Adrenal gland (tissue), 19 donors: ENCODE measurements at regions of chr14 and their contacts with region 1.

Region 1: DNA sequence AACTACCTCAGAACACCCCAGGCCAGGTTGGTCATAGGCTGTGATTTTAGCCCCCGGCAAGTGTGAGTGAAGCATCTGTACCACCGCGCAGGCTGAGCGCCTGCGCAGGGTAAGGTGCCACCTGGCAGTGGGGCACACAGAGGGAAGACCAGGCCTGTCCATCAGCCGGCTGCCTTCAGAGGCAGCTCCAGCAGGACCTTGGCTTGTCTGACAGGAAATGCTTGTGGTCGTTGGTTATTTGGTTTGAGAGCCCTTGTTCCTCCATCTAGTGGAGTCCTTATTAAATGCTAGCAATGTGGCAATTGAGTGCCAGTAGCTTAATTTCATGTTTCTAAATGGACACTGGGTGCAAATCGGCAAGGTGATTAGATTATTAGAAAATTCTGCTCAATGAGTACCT is 27.5 kb downstream of the SLC25A29 start:
- DNase-seq: peak in 1 of 7 donors; percentile 20
- H3K4me3 ChIP-seq: no peak overlapping the region
- H3K27ac ChIP-seq: no peak overlapping the region
- H3K4me1 ChIP-seq: peaks cover 2 to 28% of the 10 kb centered on the region in 2 donors
- H3K27me3 ChIP-seq: no peaks in the 10 kb centered on the region
- CTCF ChIP-seq: no peak
- POLR2A ChIP-seq: no peak

Region 2: GRCh38 chr14:100122481-100123222 is 156.1 kb before region 1 on chr14:
- intact Hi-C with region 1: no loop called
- DNase-seq: no peak
- H3K4me3 ChIP-seq: no peak overlapping the region
- H3K27ac ChIP-seq: no peak overlapping the region
- H3K4me1 ChIP-seq: no peaks in the 10 kb centered on the region
- H3K27me3 ChIP-seq: no peaks in the 10 kb centered on the region
- CTCF ChIP-seq: no peak
- POLR2A ChIP-seq: no peak

Region 3: GRCh38 chr14:100239840-100240724 is 38.6 kb before region 1 on chr14:
- intact Hi-C with region 1: loop called in 1 of 2 experiments (anchors 5 kb)
- DNase-seq: peak; percentile 90 to 95 (median 93)
- H3K4me3 ChIP-seq: peak overlapping the region; percentile 48 to 100 (median 95)
- H3K27ac ChIP-seq: peak overlapping the region; percentile 87 to 100 (median 99)
- H3K4me1 ChIP-seq: peaks cover 28 to 52% of the 10 kb centered on the region in 2 donors
- H3K27me3 ChIP-seq: no peaks in the 10 kb centered on the region
- CTCF ChIP-seq: peak in 5 of 6 experiments; percentile 38 to 81 (median 65)
- POLR2A ChIP-seq: peak; percentile 63 to 84

Region 4: GRCh38 chr14:101083564-101084435 is 805.1 kb after region 1 on chr14:
- intact Hi-C with region 1: no loop called
- DNase-seq: peak in 2 of 7 donors; percentile 18 to 30
- H3K4me3 ChIP-seq: no peak overlapping the region
- H3K27ac ChIP-seq: no peak overlapping the region
- H3K4me1 ChIP-seq: no peaks in the 10 kb centered on the region
- H3K27me3 ChIP-seq: no peaks in the 10 kb centered on the region
- CTCF ChIP-seq: no peak
- POLR2A ChIP-seq: no peak